Heart left ventricle (tissue), 16 donors: ENCODE measurements at regions of chr13 and their contacts with region 1.

Region 1: DNA sequence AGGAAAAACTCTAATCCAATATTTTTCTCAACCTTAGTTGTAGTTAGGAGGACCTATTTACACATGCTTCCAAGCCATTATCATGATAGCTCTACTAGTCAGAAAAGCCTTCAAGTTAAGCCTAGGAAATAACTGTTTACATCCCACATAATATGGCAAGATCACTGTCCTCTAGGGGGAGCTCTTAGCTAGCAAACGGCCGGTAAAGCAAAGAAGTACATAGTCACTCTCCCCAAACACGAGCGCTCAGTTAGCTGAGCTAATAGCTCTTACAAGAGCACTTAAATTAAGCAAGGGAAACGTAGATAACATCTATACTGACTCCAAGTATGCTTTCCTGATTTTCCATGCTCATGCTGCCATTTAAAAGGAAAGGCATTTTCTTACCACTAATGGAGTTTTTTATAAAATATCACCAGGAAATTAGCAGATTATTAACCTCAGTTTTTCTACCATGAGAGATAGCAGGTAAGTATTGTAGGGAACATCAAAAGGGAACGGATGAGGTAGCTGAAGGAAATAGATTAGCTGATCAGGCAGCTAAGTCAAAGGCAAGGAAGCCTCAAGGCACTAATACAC is 100.6 kb upstream of the PABPC3 start:
- DNase-seq: peak in 2 of 5 donors; percentile 28 to 33
- ATAC-seq: peak in 3 of 4 donors; percentile 67 to 87 (median 73)
- H3K4me3 ChIP-seq: no peak overlapping the region
- H3K27ac ChIP-seq: no peak overlapping the region
- H3K4me1 ChIP-seq: no peaks in the 10 kb centered on the region
- H3K27me3 ChIP-seq: peaks cover 0 to 14% (median 0%) of the 10 kb centered on the region in 9 donors
- CTCF ChIP-seq: peak; percentile 54 to 84 (median 77)
- POLR2A ChIP-seq: no peak

Region 2: DNA sequence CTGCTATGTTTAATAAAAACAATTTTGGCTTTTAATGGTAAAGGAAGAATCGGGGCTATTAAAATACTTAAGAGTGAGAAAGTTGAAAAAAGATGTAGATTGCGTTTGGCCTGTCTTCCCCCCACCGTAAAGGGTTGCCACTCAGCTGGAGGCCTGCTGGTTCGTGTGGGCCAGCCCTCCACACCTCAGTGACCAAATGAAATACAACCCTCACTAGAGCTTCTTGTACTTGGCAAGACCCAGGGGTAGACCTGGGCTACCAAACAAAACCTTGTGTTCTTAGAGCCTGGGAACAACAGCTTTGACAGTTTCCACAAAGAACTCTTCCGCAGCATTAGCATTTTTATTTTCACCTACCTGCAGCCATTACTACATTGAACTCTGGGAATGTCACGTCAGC is 52.2 kb before region 1 on chr13:
- intact Hi-C with region 1: no loop called
- DNase-seq: no peak
- ATAC-seq: no peak
- H3K4me3 ChIP-seq: no peak overlapping the region
- H3K27ac ChIP-seq: no peak overlapping the region
- H3K4me1 ChIP-seq: peaks cover 0 to 4% (median 0%) of the 10 kb centered on the region in 12 donors
- H3K27me3 ChIP-seq: no peaks in the 10 kb centered on the region
- CTCF ChIP-seq: no peak
- POLR2A ChIP-seq: no peak

Region 3: DNA sequence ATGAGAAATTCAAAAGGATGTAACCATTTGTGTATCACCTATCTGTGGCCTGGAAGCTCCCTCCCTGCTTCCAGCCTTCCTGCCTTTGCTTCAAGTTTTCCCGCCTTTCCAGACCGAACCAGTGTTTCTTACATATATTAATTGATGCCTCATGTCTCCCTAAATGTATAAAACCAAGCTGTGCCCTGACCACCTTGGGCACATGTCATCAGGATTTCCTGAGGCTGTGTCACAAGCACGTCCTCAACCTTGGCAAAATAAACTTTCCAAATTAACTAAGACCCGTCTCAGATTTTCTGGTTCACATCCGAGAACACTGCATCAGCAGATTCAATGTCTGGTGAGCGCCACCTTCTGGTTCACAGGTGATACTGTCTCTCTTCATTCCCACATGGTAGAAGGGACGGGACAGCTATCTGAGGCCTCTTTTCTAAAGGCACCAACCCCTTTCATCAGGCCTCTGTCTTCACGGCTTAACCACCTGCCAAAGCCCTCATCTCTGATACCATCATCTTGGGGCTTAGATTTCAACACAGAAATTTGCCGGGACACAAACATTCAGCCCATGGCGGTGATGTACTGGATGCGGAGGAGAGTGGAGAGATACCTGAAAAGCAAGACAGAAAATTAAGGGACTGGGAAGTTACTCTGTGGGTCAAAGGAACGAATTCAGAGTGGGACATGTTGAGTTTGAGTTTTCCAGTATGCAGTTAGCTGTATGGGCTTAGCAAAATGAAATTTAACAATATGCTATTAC is 41.9 kb after region 1 on chr13:
- intact Hi-C with region 1: loop called in 2 of 10 experiments (anchors 5 kb)
- DNase-seq: peak in 3 of 5 donors; percentile 28 to 46 (median 31)
- ATAC-seq: peak in 3 of 4 donors; percentile 50 to 71 (median 62)
- H3K4me3 ChIP-seq: no peak overlapping the region
- H3K27ac ChIP-seq: no peak overlapping the region
- H3K4me1 ChIP-seq: no peaks in the 10 kb centered on the region
- H3K27me3 ChIP-seq: peaks cover 0 to 53% (median 15%) of the 10 kb centered on the region in 9 donors
- CTCF ChIP-seq: peak; percentile 52 to 78 (median 69)
- POLR2A ChIP-seq: no peak

Region 4: DNA sequence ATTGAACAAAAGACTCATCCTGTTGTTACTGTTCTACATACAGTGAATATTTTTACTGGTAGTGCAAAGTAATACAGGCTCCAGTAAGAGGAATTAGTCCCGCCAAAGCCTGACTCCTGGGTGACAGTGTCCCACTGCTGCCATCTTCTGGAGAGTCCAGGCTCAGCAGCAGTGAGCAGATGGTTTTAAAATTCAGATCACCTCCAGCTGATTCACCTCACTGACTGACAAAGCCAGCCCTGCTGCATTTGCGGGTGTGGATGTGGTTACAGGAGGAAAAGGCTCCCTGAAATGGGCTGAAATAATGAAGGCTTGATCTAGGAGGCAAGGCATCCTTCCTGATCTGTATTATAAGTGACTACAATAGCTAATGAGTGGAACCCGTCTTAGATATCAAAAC is 118.9 kb after region 1 on chr13:
- intact Hi-C with region 1: loop called in 5 of 10 experiments (anchors 5 to 10 kb)
- DNase-seq: peak; percentile 36 to 72 (median 49)
- ATAC-seq: peak in 3 of 4 donors; percentile 62 to 84 (median 82)
- H3K4me3 ChIP-seq: no peak overlapping the region
- H3K27ac ChIP-seq: no peak overlapping the region
- H3K4me1 ChIP-seq: no peaks in the 10 kb centered on the region
- H3K27me3 ChIP-seq: peaks cover 0 to 27% (median 9%) of the 10 kb centered on the region in 9 donors
- CTCF ChIP-seq: peak; percentile 66 to 85 (median 72)
- POLR2A ChIP-seq: no peak

Region 5: GRCh38 chr13:25137637-25138115 is 142.4 kb after region 1 on chr13:
- intact Hi-C with region 1: no loop called
- DNase-seq: no peak
- ATAC-seq: no peak
- H3K4me3 ChIP-seq: no peak overlapping the region
- H3K27ac ChIP-seq: no peak overlapping the region
- H3K4me1 ChIP-seq: no peaks in the 10 kb centered on the region
- H3K27me3 ChIP-seq: peaks cover 0 to 43% (median 10%) of the 10 kb centered on the region in 9 donors
- CTCF ChIP-seq: no peak
- POLR2A ChIP-seq: no peak